Left colon (tissue), 2 donors: ENCODE measurements at regions of chr1 and their contacts with region 1.

Region 1: GRCh38 chr1:203038891-203039608 is 12.8 kb downstream of the PPFIA4 start:
- DNase-seq: peak; percentile 56 to 84
- ATAC-seq: peak; percentile 94

Region 2: DNA sequence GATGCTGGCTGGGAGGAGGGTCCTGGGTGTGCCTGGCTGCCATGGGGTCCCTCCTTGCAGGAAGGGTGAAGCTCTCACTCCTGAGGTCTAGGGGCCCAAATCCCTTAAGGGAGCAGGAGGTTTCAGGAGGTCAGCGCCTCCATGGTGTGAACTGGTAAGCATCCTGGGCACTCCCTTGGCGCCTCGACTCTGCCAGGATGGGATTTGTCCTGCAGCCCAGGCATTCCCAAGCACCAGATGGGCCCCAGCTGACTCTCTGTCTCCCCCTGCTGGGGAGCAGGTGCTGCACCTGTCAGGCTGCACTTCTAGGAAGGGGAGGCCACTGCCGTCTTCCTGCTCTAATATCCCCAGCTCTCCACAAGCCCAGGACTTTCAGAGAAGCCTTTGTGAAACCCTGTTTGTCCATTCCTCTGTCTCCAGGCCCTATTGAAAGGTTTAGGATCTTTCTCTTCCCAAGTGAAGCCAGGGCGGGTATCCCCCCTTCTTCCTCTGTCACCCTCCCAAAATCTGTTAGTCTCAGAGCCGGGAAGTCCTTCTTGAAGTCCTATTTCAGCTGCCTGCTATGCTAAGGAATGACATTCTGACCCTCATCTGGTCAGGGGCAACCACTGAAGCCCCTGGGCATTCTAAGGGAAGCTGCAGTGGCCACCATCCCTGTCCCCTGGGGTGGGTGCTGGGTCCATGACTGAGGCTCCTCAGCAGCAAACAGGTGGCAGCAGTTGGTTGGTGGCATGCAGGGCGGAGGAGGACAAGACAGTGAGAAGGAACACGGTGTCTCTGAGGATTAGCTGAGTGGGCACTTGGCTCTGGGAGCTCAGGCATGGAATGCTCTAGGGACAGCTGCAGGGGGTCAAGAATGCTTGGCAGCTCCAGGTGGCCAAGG is 133.3 kb after region 1 on chr1:
- intact Hi-C with region 1: loop called in 1 of 2 experiments (anchors 5 kb)
- DNase-seq: peak; percentile 51 to 73
- ATAC-seq: peak; percentile 87

Region 3: GRCh38 chr1:203216274-203217138 is 177.5 kb after region 1 on chr1:
- intact Hi-C with region 1: loop called (anchors 5 kb)
- DNase-seq: peak in 1 of 2 donors; percentile 39
- ATAC-seq: peak; percentile 72

Region 4: GRCh38 chr1:203593723-203594122 is 554.7 kb after region 1 on chr1:
- intact Hi-C with region 1: no loop called
- DNase-seq: peak in 1 of 2 donors; percentile 70
- ATAC-seq: peak; percentile 81